PC-3 (cell line): ENCODE measurements at regions of chr1 and their contacts with region 1.

Region 1: DNA sequence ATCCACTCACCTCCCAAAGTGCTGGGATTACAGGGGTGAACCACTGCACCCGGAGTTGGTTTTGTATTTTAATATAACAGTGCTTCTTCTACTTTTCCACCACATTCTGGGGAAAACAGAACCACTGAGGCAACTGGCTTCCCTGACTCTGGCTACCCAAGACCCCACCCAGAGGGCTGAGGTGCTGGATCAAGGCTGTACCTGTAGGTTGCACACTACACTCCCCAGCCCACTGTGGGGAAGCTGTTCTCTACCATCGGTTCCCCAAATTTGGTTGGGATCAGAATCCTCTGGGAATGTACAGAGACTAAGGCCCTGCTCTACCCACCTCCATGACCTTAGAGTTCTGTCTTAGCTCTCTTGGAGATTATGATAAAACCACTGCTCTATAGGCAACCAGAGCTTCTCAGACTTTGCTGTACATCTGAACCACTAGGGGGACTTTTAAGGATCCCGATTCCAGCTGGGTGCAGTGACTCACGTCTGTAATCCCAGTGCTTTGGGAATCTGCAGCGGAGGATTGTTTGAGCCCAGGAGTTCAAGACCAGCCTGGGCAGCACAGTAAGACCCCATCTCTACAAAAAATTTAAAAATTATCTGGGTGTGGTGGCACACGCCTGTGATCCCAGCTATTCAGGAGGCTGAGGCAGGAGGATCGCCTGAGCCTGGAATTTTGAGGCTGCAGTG is 51.6 kb downstream of the GNG4 start:
- DNase-seq: peak; percentile 56
- ATAC-seq: peak; percentile 81
- H3K4me3 ChIP-seq: no peak overlapping the region
- H3K27ac ChIP-seq: no peak overlapping the region
- H3K4me1 ChIP-seq: no peaks in the 10 kb centered on the region
- H3K27me3 ChIP-seq: no peaks in the 10 kb centered on the region
- CTCF ChIP-seq: peak; percentile 53; the same call in 1 of the 2 replicates

Region 2: GRCh38 chr1:235513495-235514366 is 84.3 kb before region 1 on chr1:
- CTCF ChIA-PET with region 1: interaction called, 4 read pairs
- POLR2A ChIA-PET with region 1: no interaction called
- intact Hi-C with region 1: loop called (anchors 1 kb)
- DNase-seq: peak; percentile 75
- ATAC-seq: peak; percentile 67
- H3K4me3 ChIP-seq: no peak overlapping the region
- H3K27ac ChIP-seq: no peak overlapping the region
- H3K4me1 ChIP-seq: no peaks in the 10 kb centered on the region
- H3K27me3 ChIP-seq: no peaks in the 10 kb centered on the region
- CTCF ChIP-seq: peak; percentile 79

Region 3: DNA sequence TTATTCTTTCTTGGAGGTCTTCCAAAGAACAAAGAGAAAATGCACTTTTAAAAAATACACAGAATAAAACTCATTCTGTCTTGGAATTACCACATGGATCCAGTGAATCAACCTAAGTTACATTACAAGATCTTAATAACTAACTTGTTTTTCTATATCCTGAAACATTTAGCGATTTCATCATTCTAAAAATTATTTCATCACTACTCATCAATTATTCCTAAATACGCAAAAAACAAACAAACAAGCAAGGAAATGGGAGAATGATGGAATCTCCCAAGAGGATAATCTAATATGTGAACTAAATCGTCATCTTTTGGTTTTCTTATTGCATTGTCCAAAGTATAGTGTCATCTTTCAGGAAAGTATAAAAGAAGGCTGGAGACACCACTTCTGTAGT is 90.1 kb after region 1 on chr1:
- CTCF ChIA-PET with region 1: no interaction called
- POLR2A ChIA-PET with region 1: no interaction called
- intact Hi-C with region 1: no loop called
- DNase-seq: no peak
- ATAC-seq: no peak
- H3K4me3 ChIP-seq: no peak overlapping the region
- H3K27ac ChIP-seq: no peak overlapping the region
- H3K4me1 ChIP-seq: no peaks in the 10 kb centered on the region
- H3K27me3 ChIP-seq: no peaks in the 10 kb centered on the region
- CTCF ChIP-seq: no peak

Region 4: DNA sequence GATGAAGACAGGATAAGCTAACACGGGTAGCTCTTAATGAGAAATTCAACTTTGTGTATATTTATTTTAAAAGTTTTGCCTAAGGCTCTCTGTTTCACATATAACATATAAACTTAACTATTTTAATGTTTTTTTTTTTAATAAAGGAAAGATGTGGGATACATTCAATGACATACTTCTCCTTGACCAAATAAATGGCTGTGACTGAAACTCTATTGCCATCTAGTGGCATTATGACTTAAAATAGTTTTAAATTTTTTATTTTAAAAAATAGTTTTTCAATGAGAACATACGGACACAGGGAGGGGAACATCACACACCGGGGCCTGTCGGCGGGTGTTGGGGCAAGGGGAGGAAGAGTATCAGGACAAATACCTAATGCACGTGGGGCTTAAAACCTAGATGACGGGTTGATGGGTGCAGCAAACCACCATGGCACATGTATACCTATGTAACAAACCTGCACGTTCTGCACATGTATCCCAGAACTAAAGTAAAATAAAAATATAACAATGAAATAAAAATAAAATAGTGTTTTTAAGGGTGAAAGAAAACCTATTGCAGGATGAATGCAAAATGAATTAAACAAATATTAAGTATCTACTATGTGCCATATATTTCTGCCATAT is 185.3 kb after region 1 on chr1:
- CTCF ChIA-PET with region 1: no interaction called
- POLR2A ChIA-PET with region 1: no interaction called
- intact Hi-C with region 1: loop called (anchors 5 kb)
- DNase-seq: peak; percentile 66
- ATAC-seq: peak; percentile 22; the same call in 1 of the 2 replicates
- H3K4me3 ChIP-seq: no peak overlapping the region
- H3K27ac ChIP-seq: no peak overlapping the region
- H3K4me1 ChIP-seq: peaks cover 5% of the 10 kb centered on the region
- H3K27me3 ChIP-seq: no peaks in the 10 kb centered on the region
- CTCF ChIP-seq: no peak; the same call in 1 of the 2 replicates